ENCODE measurements at regions of chr10 and their contacts with region 1.

Region 1: DNA sequence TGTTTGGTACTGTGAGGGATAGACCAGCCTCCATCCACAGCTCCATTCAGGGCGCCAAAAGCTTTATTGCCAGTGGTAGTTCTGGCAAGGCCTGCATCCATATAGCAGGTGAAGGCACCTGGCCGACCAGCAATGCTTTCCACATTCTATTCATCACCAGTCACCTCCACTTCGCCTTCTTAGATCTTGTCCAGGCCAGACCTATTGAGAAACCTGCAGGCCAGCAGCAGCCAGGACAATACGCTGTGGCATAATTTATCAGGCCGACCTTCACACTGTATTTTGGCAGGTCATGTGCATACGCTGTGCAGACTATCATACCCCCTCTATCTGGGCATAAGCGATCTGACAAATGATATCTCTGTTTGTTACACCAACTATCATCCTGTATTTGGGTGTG is 15.2 kb upstream of the KNDC1 start:
- DNase-seq: no peak
- H3K4me3 Mint-ChIP-seq: no peak overlapping the region
- H3K27ac Mint-ChIP-seq: no peak overlapping the region
- H3K4me1 Mint-ChIP-seq: peaks cover 3% of the 10 kb centered on the region
- H3K27me3 Mint-ChIP-seq: peaks cover 33% of the 10 kb centered on the region

Region 2: GRCh38 chr10:133067149-133068105 is 77.3 kb before region 1 on chr10:
- CTCF ChIA-PET with region 1: no interaction called
- intact Hi-C with region 1: no loop called
- DNase-seq: no peak
- H3K4me3 Mint-ChIP-seq: no peak overlapping the region
- H3K27ac Mint-ChIP-seq: no peak overlapping the region
- H3K4me1 Mint-ChIP-seq: no peaks in the 10 kb centered on the region
- H3K27me3 Mint-ChIP-seq: no peaks in the 10 kb centered on the region

Region 3: DNA sequence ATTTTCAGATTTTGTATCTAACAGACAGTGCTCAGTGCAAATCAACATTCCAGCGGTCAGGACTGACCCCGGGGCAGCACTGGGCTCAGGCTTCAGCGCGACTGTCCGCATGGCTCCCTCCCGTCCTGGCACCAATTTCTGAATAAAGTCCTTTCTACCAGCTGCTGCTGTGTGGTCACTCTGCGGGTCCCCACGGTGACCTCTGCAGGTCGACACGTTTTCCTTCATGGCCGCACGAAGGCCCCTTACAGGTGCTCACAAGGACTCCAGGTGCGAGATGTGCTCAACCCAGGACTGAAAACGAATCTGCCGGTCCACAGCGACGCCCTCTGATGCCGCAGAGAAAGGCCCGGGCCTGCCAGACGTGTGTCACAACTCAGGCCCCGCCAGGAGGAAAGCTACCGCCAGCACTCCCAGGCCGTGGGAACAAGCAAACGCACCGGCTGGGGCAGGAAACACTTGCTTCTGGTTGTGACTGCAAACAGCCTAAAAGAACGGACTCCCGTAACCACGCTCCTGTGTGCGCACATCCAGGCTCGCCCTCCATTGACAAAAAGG is 81.6 kb after region 1 on chr10:
- CTCF ChIA-PET with region 1: interaction called, 7 read pairs
- intact Hi-C with region 1: loop called (anchors 1 kb)
- DNase-seq: peak; percentile 50
- H3K4me3 Mint-ChIP-seq: no peak overlapping the region
- H3K27ac Mint-ChIP-seq: no peak overlapping the region
- H3K4me1 Mint-ChIP-seq: peaks cover 17% of the 10 kb centered on the region
- H3K27me3 Mint-ChIP-seq: peaks cover 34% of the 10 kb centered on the region

Region 4: DNA sequence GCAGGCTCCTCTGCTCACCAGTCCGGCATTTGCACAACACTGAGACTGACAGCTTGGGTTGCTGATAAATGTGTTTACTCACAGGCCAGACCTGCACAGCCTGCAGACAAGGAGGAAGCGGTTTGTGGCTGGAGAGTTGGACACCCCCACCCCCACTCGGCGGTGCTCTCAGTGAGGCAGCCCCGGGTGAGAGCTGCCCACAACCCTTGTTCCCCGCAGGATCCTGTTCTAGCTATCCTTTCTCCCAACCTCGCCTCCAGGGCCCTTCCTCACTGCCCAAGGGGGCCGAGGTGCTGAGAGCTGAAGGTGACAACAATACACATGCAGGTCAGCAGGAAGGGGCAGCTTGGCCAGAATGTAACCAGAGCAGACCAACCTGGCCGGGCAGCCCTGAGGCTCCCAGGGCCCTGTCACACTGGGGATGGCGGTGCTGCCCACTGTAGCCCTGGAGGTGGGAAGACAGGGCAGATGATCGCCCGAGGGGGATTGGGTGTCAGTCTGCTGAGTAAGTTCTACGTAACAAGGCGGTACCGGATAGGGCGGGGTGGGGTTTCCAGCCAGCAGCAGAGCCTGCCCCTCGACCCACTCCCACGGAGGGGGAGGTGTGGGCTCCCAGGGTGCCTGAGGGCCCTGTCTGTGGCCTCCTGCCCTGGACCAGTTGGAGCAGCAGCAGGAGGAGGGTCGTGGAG is 133.9 kb after region 1 on chr10:
- CTCF ChIA-PET with region 1: interaction called, 9 read pairs
- intact Hi-C with region 1: loop called (anchors 1 kb)
- DNase-seq: no peak
- H3K4me3 Mint-ChIP-seq: no peak overlapping the region
- H3K27ac Mint-ChIP-seq: peak overlapping the region; percentile 19
- H3K4me1 Mint-ChIP-seq: peaks cover 23% of the 10 kb centered on the region
- H3K27me3 Mint-ChIP-seq: no peaks in the 10 kb centered on the region

Region 5: DNA sequence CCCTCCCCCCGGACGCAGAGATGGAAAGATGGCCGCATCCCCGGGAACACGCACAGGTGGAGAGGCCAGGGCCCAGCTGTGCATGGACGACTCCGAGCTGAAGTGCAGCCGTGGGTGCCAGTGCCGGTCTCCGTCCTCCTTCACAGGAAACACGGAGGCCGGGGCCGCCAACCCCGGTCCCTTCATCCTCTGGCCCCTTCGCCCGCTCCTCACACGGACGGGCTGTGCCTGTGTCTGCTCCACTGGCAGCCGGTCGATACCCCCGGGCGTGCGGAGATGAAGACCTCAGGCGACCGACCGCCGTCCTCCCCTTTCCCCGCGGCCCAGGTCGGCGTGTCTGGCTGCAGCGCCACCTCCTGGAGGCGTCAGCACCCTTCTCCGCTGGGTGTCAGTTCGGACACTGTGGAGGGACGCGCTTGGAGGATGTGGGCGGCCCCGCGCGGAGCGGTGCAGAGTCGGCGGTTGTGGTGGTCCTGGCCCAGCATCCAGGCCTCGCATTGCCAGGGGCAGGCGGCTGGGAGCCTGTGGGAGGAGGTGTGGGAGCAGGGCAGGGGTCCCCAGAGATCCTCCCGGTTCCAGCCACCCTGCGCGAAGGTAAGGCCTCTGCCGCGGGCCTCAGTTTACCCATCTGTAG is 173.8 kb after region 1 on chr10:
- CTCF ChIA-PET with region 1: interaction called, 6 read pairs
- intact Hi-C with region 1: loop called (anchors 1 kb)
- DNase-seq: peak; percentile 74
- H3K4me3 Mint-ChIP-seq: peak overlapping the region; percentile 59
- H3K27ac Mint-ChIP-seq: no peak overlapping the region
- H3K4me1 Mint-ChIP-seq: peaks cover 7% of the 10 kb centered on the region
- H3K27me3 Mint-ChIP-seq: peaks cover 6% of the 10 kb centered on the region

Region 6: GRCh38 chr10:133438711-133439273 is 294.0 kb after region 1 on chr10:
- CTCF ChIA-PET with region 1: no interaction called
- intact Hi-C with region 1: no loop called
- DNase-seq: no peak
- H3K4me3 Mint-ChIP-seq: no peak overlapping the region
- H3K27ac Mint-ChIP-seq: no peak overlapping the region
- H3K4me1 Mint-ChIP-seq: peaks cover 7% of the 10 kb centered on the region
- H3K27me3 Mint-ChIP-seq: peaks cover 6% of the 10 kb centered on the region